PC-9 (cell line): ENCODE measurements at regions of chr2 and their contacts with region 1.

Region 1: DNA sequence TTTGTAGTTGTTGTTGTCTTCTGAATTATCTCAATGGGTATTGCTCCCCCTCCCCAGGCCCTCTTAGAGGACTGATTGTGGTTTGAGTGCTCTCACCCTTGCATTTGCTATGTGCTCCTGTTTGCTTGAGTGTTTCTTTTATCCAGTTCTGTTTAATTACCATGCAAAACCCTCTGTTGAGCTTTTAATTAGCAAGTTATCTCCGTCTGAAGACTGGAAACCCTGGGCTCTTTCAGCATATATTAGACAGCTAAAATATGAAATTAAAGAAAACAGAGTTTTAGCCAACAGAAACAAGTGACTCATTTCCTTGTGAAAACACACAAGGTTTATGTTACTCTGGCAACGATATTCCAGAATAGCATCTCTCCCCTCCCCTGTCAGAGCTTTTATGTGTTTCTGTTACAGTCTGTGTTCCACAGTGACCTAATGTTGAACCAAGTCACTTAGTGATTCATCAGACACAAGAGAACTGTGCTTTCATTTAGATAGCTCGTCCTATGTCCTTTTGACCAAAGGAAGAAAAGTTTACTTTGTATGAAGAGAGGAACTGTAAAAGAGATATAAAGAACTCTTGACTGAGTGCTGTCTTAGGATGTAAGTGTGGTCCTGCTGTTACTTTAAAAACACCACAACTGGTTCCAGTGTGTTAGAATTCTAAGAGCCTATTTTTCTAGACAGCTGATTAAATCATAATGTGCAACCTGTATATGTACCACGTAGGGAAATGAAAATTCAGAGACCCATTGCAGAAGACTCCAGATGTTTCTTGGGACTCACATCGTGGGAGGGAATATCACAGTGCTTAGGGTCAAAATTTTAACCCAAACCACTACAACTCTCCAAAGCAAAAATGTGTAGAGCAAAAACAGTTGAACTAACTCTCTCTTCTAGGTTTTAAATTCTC is 172.8 kb upstream of the RBMS1 start:
- DNase-seq: peak; percentile 22 to 91
- H3K4me3 ChIP-seq: peak overlapping the region; percentile 42; the same call in 1 of the 2 replicates
- H3K27ac ChIP-seq: peak overlapping the region; percentile 73
- H3K4me1 ChIP-seq: peaks cover 21% of the 10 kb centered on the region
- H3K27me3 ChIP-seq: no peaks in the 10 kb centered on the region
- CTCF ChIP-seq: no peak

Region 2: GRCh38 chr2:160752496-160753330 is 86.3 kb after region 1 on chr2:
- CTCF ChIA-PET with region 1: no interaction called
- POLR2A ChIA-PET with region 1: no interaction called
- intact Hi-C with region 1: loop called (anchors 5 kb)
- DNase-seq: peak; percentile 44 to 83
- H3K4me3 ChIP-seq: peak overlapping the region; percentile 43; the same call in 1 of the 2 replicates
- H3K27ac ChIP-seq: peak overlapping the region; percentile 96
- H3K4me1 ChIP-seq: peaks cover 56% of the 10 kb centered on the region
- H3K27me3 ChIP-seq: no peaks in the 10 kb centered on the region
- CTCF ChIP-seq: no peak